ENCODE measurements at regions of chr6 and their contacts with region 1.

Region 1: GRCh38 chr6:57316581-57317059 is 810 bp upstream of the PRIM2 start:
- DNase-seq: peak; percentile 76
- ATAC-seq: peak; percentile 96

Region 2: DNA sequence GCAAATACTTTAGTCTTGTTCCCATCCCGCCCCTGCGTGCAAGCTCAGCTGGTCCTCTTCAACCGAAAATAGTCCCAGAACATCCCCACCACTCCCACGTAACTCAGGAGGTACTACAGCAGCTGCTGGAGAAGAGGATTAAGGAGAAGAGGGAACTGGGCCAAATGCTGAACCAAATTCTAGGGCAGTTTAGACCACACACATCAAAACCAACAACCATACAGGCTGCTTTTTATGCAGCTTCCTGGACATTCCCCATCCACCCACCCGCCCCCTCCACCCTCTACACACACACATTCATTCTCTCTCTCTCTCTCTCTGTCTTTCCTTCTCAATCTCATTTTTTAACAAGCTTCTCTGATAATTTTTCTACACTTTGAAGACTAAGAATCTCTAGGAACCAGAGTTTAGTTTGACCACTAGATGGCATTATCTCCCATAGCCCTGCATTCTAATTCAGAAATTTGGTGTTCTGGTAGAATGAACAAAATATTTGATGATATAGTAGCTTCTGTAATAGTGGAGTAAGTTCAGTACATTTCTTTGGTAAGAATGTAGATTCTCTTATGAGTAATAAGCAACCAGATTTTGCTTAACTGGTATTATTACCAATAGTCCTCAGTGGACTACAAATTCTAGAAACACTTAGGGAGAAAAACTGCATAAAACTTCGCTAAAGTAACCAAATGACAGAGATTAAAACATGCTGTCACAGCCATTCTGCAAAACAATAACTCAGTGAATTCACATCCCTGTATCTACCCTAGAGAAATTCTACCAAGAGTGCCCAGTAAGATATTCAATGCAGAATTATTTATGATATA is 413.8 kb before region 1 on chr6:
- intact Hi-C with region 1: loop called (anchors 5 kb)
- DNase-seq: no peak
- ATAC-seq: peak; percentile 34

Region 3: GRCh38 chr6:57040009-57040408 is 276.6 kb before region 1 on chr6:
- intact Hi-C with region 1: loop called (anchors 10 kb)
- DNase-seq: no peak
- ATAC-seq: no peak

Region 4: GRCh38 chr6:57089687-57090460 is 226.7 kb before region 1 on chr6 and contains the start of gene ZNF451:
- intact Hi-C with region 1: loop called (anchors 1 kb)
- DNase-seq: peak; percentile 99
- ATAC-seq: peak; percentile 99
- total RNA-seq, gene ZNF451: 19.0 TPM

Region 5: GRCh38 chr6:57172136-57173055 is 144.2 kb before region 1 on chr6 and contains the start of gene BAG2:
- intact Hi-C with region 1: loop called (anchors 5 kb)
- DNase-seq: peak; percentile 95
- ATAC-seq: peak; percentile 97
- total RNA-seq, gene BAG2: 15.4 TPM

Region 6: GRCh38 chr6:57221936-57222742 is 94.5 kb before region 1 on chr6 and contains the start of gene RAB23:
- intact Hi-C with region 1: loop called (anchors 5 kb)
- DNase-seq: peak; percentile 91
- ATAC-seq: peak; percentile 99
- total RNA-seq, gene RAB23: 12.0 TPM

Region 7: DNA sequence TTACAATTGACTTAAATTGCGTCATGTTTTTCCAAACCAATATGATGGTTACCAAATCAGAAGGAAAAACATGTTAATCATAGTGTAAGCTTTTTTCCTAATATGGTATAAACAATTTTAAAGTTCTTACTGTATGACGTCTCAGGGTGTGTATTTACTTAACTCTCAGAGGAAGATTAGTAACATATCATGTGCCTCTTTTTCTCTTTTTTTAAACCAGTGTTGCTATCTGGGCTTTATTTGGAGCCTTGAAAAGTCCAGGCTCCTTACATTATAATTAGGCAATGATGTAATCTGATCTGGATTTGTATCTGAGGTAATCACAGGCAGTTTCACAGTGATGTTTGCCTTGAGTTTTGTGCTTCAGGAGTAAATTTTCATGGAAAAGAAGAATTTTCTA is 74.1 kb before region 1 on chr6:
- intact Hi-C with region 1: no loop called
- DNase-seq: no peak
- ATAC-seq: peak; percentile 76

Region 8: GRCh38 chr6:57288115-57288514 is 28.5 kb before region 1 on chr6:
- intact Hi-C with region 1: no loop called
- DNase-seq: no peak
- ATAC-seq: no peak

Region 9: GRCh38 chr6:57469072-57469471 is 152.5 kb after region 1 on chr6:
- intact Hi-C with region 1: no loop called
- DNase-seq: no peak
- ATAC-seq: no peak

Measured in Right ventricle myocardium inferior (tissue), 1 donor.